PC-9 (cell line): ENCODE measurements at regions of chr1 and their contacts with region 1.

Region 1: GRCh38 chr1:224851210-224851847 is 78.1 kb upstream of the DNAH14 start:
- DNase-seq: peak; percentile 55 to 78
- H3K4me3 ChIP-seq: no peak overlapping the region
- H3K27ac ChIP-seq: no peak overlapping the region
- H3K4me1 ChIP-seq: no peaks in the 10 kb centered on the region
- H3K27me3 ChIP-seq: no peaks in the 10 kb centered on the region
- CTCF ChIP-seq: peak; percentile 89

Region 2: DNA sequence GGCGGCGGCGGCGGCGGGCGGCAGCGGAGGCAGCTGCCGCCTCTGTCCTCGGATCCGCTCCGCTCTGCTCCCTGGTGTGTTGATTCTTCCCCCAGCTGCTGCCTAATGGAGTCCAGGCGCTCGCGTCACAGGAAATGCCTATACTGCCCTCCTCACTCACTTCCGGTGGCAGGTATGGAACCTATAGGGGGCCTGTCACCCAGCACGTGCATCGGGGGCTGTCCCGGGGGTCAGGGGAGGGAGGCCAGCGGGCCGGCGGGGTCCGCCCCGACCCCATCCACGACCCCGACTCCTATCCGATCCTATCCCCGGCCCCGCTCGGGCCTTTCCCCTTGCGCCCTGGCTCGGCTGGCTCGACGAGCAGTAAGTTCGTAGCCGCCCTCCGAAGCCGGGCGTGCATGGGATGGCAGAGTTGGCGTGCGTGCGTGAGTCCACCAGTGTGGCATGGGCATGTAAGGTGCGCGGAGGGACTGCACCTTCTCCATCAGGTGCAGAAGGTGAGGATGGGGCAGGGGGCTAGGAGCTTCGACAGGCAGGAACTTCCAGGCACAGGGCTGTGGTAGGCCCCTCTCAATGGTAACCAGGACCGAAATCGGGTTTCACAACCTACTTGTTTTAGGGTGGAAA is 416.5 kb before region 1 on chr1 and contains the start of gene WDR26:
- CTCF ChIA-PET with region 1: no interaction called
- POLR2A ChIA-PET with region 1: no interaction called
- intact Hi-C with region 1: loop called (anchors 10 kb)
- DNase-seq: peak; percentile 76 to 78
- H3K4me3 ChIP-seq: peak within 1 kb of the TSS; percentile 87
- H3K27ac ChIP-seq: peak within 1 kb of the TSS; percentile 71
- H3K4me1 ChIP-seq: peaks cover 50% of the 10 kb centered on the region
- H3K27me3 ChIP-seq: no peaks in the 10 kb centered on the region
- CTCF ChIP-seq: 0 out of 2 replicates have a peak, but pooled peaks have one; percentile 17
- total RNA-seq, gene WDR26: 76.0 and 88.9 TPM in 2 replicates

Region 3: DNA sequence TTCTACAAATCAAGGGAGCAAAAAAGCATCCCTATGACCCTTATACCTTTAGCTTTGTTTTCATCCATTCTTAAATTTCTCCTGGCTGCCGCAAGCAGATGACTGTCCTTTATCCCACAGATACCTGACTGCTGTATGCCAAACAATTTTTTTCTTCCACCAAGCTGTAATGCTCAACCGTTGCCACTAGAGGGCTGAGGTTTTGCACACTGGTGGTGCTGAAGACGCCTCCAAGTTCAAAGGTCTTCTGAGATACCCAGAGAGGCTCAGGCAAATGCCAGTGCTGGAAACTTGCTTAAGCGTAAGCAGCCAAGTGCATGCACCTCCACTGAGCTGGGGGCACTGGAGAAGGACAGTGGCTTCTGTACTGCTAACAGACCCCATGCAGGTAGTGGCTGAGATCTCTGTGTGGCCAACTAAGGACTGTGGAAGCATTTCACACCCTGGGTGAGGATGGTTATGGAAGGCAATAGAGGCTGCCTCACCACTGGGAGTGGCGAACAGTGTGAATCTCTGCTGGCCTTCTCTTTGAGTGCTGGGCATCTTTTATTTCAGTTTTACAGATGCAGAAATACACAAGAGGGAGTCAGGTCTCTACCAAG is 206.7 kb before region 1 on chr1:
- CTCF ChIA-PET with region 1: interaction called, 6 read pairs
- POLR2A ChIA-PET with region 1: no interaction called
- intact Hi-C with region 1: loop called (anchors 1 kb)
- DNase-seq: peak in 1 of 2 experiments; percentile 62
- H3K4me3 ChIP-seq: no peak overlapping the region
- H3K27ac ChIP-seq: no peak overlapping the region
- H3K4me1 ChIP-seq: no peaks in the 10 kb centered on the region
- H3K27me3 ChIP-seq: no peaks in the 10 kb centered on the region
- CTCF ChIP-seq: peak; percentile 96

Region 4: DNA sequence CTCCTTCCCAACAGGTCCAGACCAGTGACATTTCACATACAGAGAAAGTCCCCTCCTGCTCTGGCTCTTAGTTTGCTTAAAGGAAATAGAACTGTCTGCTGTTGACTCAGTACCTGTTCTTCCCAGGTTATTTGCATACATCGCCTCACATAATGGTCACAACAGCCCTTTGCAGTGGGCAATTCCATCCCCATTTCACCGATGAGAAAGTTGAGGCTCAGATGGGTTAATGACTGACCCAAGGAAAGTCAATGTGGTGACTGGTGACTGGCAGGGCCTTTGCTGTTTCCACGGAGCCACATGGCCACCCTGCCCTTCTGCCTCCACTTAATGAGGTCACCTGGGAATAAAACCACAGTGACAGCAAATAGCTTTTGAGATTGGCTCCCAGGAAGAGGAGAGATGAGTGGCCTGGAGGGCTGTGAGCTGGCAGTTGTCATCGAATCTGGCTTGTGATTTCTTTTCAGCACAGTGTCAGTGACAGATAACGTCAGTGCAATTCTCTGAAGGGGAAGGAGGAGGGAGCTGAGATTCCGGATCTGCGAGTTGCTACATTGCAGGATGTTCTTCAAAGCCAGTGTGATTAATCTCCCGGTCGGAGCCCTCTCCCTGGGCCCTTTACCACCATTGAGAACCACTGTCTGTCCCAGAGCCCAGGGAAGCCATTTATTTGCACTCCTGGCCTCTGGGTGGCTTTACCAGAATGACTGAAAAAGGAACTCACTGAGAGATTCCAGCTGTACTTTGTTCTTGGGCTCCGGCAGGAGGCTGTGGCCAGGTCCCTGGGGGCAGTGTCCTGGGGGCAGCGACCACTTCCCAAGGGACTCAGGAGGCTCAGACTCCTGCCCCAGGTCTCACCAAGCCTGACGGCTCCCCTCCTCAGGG is 118.1 kb before region 1 on chr1:
- CTCF ChIA-PET with region 1: no interaction called
- POLR2A ChIA-PET with region 1: no interaction called
- intact Hi-C with region 1: loop called (anchors 1 kb)
- DNase-seq: peak; percentile 73 to 94
- H3K4me3 ChIP-seq: peak overlapping the region; percentile 40; the same call in 1 of the 2 replicates
- H3K27ac ChIP-seq: peak overlapping the region; percentile 97
- H3K4me1 ChIP-seq: peaks cover 53% of the 10 kb centered on the region
- H3K27me3 ChIP-seq: no peaks in the 10 kb centered on the region
- CTCF ChIP-seq: no peak

Region 5: DNA sequence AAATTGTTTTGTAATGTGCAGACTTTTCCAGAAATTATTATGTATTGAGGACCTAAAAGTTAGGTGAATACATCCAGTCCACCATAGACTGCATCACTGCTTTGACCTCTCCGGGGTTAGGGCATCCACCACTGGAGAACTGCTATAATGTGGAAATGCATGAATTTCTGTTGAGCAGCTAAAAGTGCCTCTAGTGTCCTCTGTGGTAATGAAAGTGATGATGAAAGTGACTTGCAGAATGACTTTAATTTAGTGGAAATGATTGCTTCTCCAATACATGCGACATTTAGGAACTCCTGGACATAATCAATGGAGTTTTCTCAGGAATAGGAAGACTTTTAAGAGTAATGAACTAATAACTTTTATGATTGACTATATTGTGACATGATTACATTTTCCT is 405.8 kb after region 1 on chr1:
- CTCF ChIA-PET with region 1: no interaction called
- POLR2A ChIA-PET with region 1: no interaction called
- intact Hi-C with region 1: no loop called
- DNase-seq: no peak
- H3K4me3 ChIP-seq: no peak overlapping the region
- H3K27ac ChIP-seq: no peak overlapping the region
- H3K4me1 ChIP-seq: no peaks in the 10 kb centered on the region
- H3K27me3 ChIP-seq: no peaks in the 10 kb centered on the region
- CTCF ChIP-seq: no peak